ENCODE measurements at regions of chr7 and their contacts with region 1.

Region 1: GRCh38 chr7:102464577-102465280 is at the starts of genes ALKBH4 and LRWD1:
- DNase-seq: peak; percentile 98
- ATAC-seq: peak; percentile 94
- H3K4me3 Mint-ChIP-seq: peak within 1 kb of the TSS; percentile 95
- H3K27ac Mint-ChIP-seq: peak within 1 kb of the TSS; percentile 73
- H3K4me1 Mint-ChIP-seq: peaks cover 30% of the 10 kb centered on the region
- H3K27me3 Mint-ChIP-seq: no peaks in the 10 kb centered on the region
- total RNA-seq, gene ALKBH4: 6.1 to 9.1 TPM
- total RNA-seq, gene LRWD1: 13.6 to 14.4 TPM

Region 2: DNA sequence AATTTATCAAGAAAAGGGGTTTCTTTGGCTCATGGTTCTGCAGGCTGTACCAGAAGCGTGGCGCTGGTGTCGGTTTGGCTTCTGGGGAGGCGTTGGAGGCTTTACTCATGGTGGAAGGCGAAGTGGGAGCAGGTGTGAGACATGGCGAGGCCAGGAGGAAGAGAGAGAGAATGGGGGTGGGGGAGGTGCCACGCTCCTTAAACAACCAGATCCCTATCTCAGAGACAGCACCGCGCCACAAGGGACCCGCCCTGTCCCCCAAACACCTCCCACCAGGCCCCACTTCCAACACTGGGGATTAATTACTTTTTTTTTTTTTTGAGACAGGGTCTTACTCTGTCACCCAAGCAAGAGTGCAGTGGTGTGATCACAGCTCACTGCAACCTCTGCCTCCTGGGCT is 196.1 kb before region 1 on chr7:
- CTCF ChIA-PET with region 1: no interaction called
- POLR2A ChIA-PET with region 1: no interaction called
- intact Hi-C with region 1: no loop called
- DNase-seq: no peak
- ATAC-seq: no peak
- H3K4me3 Mint-ChIP-seq: no peak overlapping the region
- H3K27ac Mint-ChIP-seq: no peak overlapping the region
- H3K4me1 Mint-ChIP-seq: peaks cover 2% of the 10 kb centered on the region
- H3K27me3 Mint-ChIP-seq: no peaks in the 10 kb centered on the region

Region 3: DNA sequence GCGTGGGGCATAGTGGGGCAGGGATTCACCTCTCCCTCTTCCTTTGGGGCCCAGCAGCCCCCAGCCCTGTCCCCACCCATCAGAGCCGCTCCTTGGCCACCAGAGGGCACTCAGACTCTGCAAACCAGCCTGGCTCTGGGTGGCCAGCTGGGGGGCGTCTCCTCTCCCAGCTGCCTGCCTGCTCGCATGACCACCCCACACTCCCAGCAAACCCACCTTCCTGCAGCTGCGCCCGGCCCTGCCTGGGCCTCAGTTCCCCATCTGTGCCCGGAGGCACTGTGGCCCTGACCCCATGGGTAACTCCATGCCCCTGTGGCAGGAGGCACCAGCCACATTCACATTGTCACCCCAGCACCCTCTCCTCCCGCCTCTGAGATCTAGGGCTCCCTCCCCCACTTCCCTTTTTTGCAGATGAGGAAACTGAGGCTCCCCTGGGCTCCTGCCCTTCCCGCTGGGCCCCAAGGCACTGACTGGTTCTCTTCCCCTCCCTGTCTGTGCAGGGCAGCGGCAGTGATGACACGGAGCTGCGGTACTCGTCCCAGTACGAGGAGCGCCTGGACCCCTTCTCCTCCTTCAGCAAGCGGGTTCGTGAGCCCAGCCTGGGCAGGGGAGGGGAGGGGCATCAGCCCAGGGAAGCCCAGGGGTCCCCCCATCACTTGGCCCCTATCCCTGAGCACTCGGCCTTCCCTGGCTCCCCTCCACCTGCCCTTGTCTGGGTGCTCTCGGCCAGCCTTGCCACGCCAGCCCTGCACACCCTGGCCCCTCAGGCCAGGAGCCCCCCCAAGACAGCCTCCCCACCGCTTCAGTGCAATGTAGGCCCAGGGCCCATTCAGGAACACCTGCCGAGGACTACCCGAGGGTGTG is 185.0 kb before region 1 on chr7:
- CTCF ChIA-PET with region 1: interaction called, 3 read pairs
- POLR2A ChIA-PET with region 1: no interaction called
- intact Hi-C with region 1: loop called in 1 of 2 experiments (anchors 10 kb)
- DNase-seq: peak; percentile 79
- ATAC-seq: peak; percentile 92
- H3K4me3 Mint-ChIP-seq: no peak overlapping the region
- H3K27ac Mint-ChIP-seq: no peak overlapping the region
- H3K4me1 Mint-ChIP-seq: peaks cover 12% of the 10 kb centered on the region
- H3K27me3 Mint-ChIP-seq: peaks cover under 1% of the 10 kb centered on the region

Region 4: GRCh38 chr7:102396027-102397019 is 68.4 kb before region 1 on chr7 and contains the start of gene PRKRIP1:
- CTCF ChIA-PET with region 1: interaction called, 3 read pairs
- POLR2A ChIA-PET with region 1: no interaction called
- intact Hi-C with region 1: loop called (anchors 1 kb)
- DNase-seq: peak; percentile 91
- ATAC-seq: peak; percentile 97
- H3K4me3 Mint-ChIP-seq: peak within 1 kb of the TSS; percentile 93
- H3K27ac Mint-ChIP-seq: peak within 1 kb of the TSS; percentile 93
- H3K4me1 Mint-ChIP-seq: peaks cover 19% of the 10 kb centered on the region
- H3K27me3 Mint-ChIP-seq: no peaks in the 10 kb centered on the region
- total RNA-seq, gene PRKRIP1: 26.2 to 31.4 TPM

Region 5: GRCh38 chr7:102425639-102426267 is 39.0 kb before region 1 on chr7:
- CTCF ChIA-PET with region 1: interaction called, 5 read pairs
- POLR2A ChIA-PET with region 1: interaction called, 4 read pairs
- intact Hi-C with region 1: loop called in 1 of 2 experiments (anchors 2 kb)
- DNase-seq: peak; percentile 91
- ATAC-seq: peak; percentile 82
- H3K4me3 Mint-ChIP-seq: peak overlapping the region; percentile 72
- H3K27ac Mint-ChIP-seq: peak overlapping the region; percentile 100
- H3K4me1 Mint-ChIP-seq: peaks cover 60% of the 10 kb centered on the region
- H3K27me3 Mint-ChIP-seq: no peaks in the 10 kb centered on the region